Endothelial cell of umbilical vein (primary cell): ENCODE measurements at regions of chrX and their contacts with region 1.

Region 1: GRCh38 chrX:96436105-96436504 is 248.5 kb upstream of the DIAPH2 start:
- DNase-seq: peak; percentile 85
- H3K4me3 ChIP-seq: no peak overlapping the region
- H3K27ac ChIP-seq: peak overlapping the region; percentile 99
- H3K4me1 ChIP-seq: peaks cover 44% of the 10 kb centered on the region
- H3K27me3 ChIP-seq: no peaks in the 10 kb centered on the region
- CTCF ChIP-seq: no peak
- POLR2A ChIP-seq: no peak

Region 2: GRCh38 chrX:96407057-96407456 is 29.0 kb before region 1 on chrX:
- CTCF ChIA-PET with region 1: no interaction called
- POLR2A ChIA-PET with region 1: no interaction called
- dilution Hi-C with region 1: no loop called
- intact Hi-C with region 1: loop called (anchors 2 kb)
- DNase-seq: peak; percentile 57
- H3K4me3 ChIP-seq: no peak overlapping the region
- H3K27ac ChIP-seq: peak overlapping the region; percentile 57
- H3K4me1 ChIP-seq: peaks cover 25% of the 10 kb centered on the region
- H3K27me3 ChIP-seq: no peaks in the 10 kb centered on the region
- CTCF ChIP-seq: no peak
- POLR2A ChIP-seq: no peak

Region 3: DNA sequence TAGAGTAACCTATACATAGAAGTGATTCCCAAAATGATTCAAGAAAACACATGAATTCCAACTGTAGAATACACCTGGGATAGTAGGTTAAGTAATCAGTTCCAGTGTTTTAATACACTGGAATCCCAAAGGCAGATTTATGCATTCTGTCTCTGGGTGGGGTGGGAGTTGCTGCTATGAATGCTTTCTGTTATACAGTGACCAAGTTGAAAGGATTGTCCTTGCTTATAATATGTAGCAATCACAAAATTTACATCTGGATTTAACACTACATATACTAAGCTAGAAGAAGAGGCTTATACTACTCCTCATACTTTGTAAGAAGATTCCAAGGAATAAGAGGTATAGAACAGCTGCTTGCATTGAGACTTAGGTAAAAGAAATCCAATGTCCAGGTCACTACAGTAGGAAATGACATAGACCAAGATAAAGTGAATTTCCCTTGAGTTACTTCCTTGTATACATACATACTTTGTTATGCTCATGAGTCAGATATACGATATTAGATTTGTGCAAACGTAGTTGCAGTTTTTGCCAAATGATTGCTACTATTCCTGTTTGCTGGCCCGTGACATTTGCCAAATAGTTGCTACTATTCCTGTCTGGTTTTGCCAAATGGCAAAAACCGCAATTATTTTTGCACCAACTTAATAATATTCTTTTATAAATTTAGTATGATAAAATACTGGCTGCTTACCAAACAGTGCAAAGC is 38.1 kb after region 1 on chrX:
- CTCF ChIA-PET with region 1: no interaction called
- POLR2A ChIA-PET with region 1: no interaction called
- dilution Hi-C with region 1: no loop called
- intact Hi-C with region 1: loop called (anchors 1 kb)
- DNase-seq: peak; percentile 64
- H3K4me3 ChIP-seq: no peak overlapping the region
- H3K27ac ChIP-seq: peak overlapping the region; percentile 55
- H3K4me1 ChIP-seq: peaks cover 22% of the 10 kb centered on the region
- H3K27me3 ChIP-seq: no peaks in the 10 kb centered on the region
- CTCF ChIP-seq: no peak
- POLR2A ChIP-seq: no peak

Region 4: DNA sequence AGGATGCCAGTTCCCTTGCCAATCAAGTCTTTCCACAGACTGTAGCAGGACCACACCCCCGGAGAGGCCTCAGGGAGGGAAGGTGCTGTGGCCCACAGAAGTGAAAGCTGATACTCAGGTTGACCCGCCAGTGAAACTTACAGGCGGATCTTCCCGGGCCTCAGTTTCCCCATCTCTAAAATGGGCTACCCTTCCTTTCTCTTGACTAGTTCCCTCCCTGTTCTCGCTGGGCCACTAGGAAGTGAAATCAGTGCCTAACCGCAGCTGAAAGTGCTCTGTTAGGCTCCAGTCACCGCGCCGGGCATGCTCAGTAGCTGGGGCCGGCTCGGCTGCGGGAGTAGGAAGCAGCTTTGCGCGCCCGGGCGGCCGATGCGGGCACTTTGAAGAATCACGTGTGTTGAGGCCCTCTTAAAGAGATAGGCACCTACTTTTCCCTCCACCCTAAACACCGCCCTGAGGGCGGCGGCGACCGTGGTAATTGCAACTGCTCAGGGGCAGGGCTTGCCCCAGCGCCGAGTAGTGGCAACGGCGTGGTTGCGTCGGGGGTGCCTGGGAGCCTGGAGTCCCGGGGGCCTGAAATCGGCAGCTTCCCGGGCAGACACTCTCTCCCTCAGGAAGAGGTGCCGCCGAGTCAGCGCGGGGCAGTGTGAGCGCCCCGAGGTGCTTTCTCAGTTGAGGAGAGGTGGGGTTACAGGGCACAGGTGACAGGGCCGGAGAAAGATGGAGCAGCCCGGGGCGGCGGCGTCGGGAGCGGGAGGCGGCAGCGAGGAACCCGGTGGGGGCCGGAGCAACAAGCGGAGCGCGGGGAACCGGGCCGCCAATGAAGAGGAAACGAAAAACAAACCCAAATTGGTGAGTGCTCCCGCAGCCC is 248.5 kb after region 1 on chrX and contains the start of gene DIAPH2:
- CTCF ChIA-PET with region 1: no interaction called
- POLR2A ChIA-PET with region 1: no interaction called
- dilution Hi-C with region 1: no loop called
- intact Hi-C with region 1: loop called (anchors 2 kb)
- DNase-seq: peak; percentile 76
- H3K4me3 ChIP-seq: peak within 1 kb of the TSS; percentile 75 to 92 (median 76)
- H3K27ac ChIP-seq: peak within 1 kb of the TSS; percentile 68
- H3K4me1 ChIP-seq: peaks cover 11% of the 10 kb centered on the region
- H3K27me3 ChIP-seq: no peaks in the 10 kb centered on the region
- CTCF ChIP-seq: no peak
- POLR2A ChIP-seq: no peak
- total RNA-seq, gene DIAPH2: 30.0 and 30.3 TPM in 2 replicates

Region 5: GRCh38 chrX:96704629-96705028 is 268.5 kb after region 1 on chrX:
- CTCF ChIA-PET with region 1: no interaction called
- POLR2A ChIA-PET with region 1: no interaction called
- dilution Hi-C with region 1: no loop called
- intact Hi-C with region 1: loop called (anchors 5 kb)
- DNase-seq: peak; percentile 68
- H3K4me3 ChIP-seq: no peak overlapping the region
- H3K27ac ChIP-seq: peak overlapping the region; percentile 90
- H3K4me1 ChIP-seq: peaks cover 26% of the 10 kb centered on the region
- H3K27me3 ChIP-seq: no peaks in the 10 kb centered on the region
- CTCF ChIP-seq: no peak
- POLR2A ChIP-seq: no peak

Region 6: DNA sequence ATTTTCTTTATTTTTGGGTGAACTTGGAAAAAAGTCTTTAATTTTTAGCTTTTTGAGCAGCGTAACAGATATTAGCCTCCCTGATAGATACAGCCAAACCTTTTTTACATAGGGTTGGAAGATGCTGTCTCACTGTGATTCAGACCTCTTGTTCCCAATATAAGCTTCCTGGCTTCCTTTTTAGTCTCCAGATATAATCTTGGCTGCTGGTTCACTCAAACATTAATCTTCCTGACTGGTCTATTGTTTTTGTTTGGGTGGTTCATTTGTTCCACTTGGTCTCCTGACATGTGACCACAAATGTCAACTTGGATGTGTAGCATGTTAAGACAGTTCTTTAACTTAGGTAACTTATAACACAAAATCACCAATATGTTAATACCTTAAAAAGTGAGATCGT is 470.6 kb after region 1 on chrX:
- CTCF ChIA-PET with region 1: no interaction called
- POLR2A ChIA-PET with region 1: no interaction called
- dilution Hi-C with region 1: no loop called
- intact Hi-C with region 1: loop called (anchors 5 kb)
- DNase-seq: peak; percentile 90
- H3K4me3 ChIP-seq: no peak overlapping the region
- H3K27ac ChIP-seq: peak overlapping the region; percentile 86
- H3K4me1 ChIP-seq: peaks cover 31% of the 10 kb centered on the region
- H3K27me3 ChIP-seq: no peaks in the 10 kb centered on the region
- CTCF ChIP-seq: no peak
- POLR2A ChIP-seq: no peak

Region 7: GRCh38 chrX:97334850-97335249 is 898.7 kb after region 1 on chrX:
- CTCF ChIA-PET with region 1: no interaction called
- POLR2A ChIA-PET with region 1: no interaction called
- dilution Hi-C with region 1: no loop called
- intact Hi-C with region 1: no loop called
- DNase-seq: no peak
- H3K4me3 ChIP-seq: no peak overlapping the region
- H3K27ac ChIP-seq: no peak overlapping the region
- H3K4me1 ChIP-seq: no peaks in the 10 kb centered on the region
- H3K27me3 ChIP-seq: no peaks in the 10 kb centered on the region
- CTCF ChIP-seq: no peak
- POLR2A ChIP-seq: no peak